ENCODE measurements at regions of chr5 and their contacts with region 1.

Region 1: GRCh38 chr5:151825445-151825844 is 53.7 kb downstream of the G3BP1 start:
- DNase-seq: peak in 8 of 10 donors; percentile 37 to 67 (median 60)
- H3K4me3 ChIP-seq: no peak overlapping the region
- H3K27ac ChIP-seq: peak overlapping the region in 1 of 59 donors; percentile 11
- H3K27me3 ChIP-seq: no peaks in the 10 kb centered on the region
- CTCF ChIP-seq: peak; percentile 77 to 97 (median 89)

Region 2: DNA sequence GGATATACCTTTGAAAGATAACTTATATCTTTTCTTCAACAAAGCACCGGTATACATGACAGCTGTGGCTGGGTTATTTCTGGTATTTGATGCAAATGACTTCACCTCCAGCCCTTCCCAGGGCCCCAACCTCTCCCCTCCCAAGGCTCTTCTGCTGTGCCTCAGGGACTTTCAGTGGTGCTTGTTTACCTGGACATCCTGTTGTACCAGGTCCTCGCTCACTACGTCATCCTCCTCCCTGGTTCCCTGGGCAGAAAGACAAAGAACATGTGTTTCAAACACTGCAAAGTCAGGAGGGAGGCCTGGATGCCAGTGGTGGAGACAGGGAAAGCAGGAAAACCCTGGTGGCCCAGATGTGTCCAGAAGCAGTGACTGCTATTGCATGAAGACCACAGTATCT is 691.2 kb before region 1 on chr5:
- intact Hi-C with region 1: no loop called
- DNase-seq: no peak
- H3K4me3 ChIP-seq: no peak overlapping the region
- H3K27ac ChIP-seq: no peak overlapping the region
- H3K27me3 ChIP-seq: no peaks in the 10 kb centered on the region
- CTCF ChIP-seq: no peak

Region 3: DNA sequence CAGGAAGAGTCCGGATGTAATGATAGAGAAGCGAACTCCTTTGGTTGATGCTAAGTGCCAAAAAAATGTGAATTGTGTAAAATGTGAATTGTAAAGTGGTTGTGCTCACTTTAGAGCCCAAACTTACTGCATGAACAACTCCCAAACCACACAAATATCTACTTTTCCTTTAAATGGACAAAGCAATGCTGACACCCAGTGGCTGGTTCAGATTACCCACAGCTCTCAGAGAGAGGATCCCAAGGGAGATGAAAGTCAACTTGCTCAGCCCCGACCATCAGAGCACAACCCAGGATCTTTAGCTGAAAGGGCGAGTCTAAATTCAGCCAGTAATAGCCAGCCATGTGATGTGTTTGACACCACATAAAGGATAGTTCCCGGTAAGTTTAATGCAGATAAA is 446.0 kb after region 1 on chr5:
- intact Hi-C with region 1: loop called (anchors 5 to 10 kb)
- DNase-seq: peak in 5 of 10 donors; percentile 8 to 49 (median 35)
- H3K4me3 ChIP-seq: no peak overlapping the region
- H3K27ac ChIP-seq: no peak overlapping the region
- H3K27me3 ChIP-seq: no peaks in the 10 kb centered on the region
- CTCF ChIP-seq: peak in 52 of 56 donors; percentile 34 to 70 (median 50)

Region 4: GRCh38 chr5:152349683-152350526 is 524.5 kb after region 1 on chr5:
- intact Hi-C with region 1: loop called in 1 of 2 experiments (anchors 2 kb)
- DNase-seq: peak; percentile 37 to 68 (median 56)
- H3K4me3 ChIP-seq: no peak overlapping the region
- H3K27ac ChIP-seq: no peak overlapping the region
- H3K27me3 ChIP-seq: no peaks in the 10 kb centered on the region
- CTCF ChIP-seq: peak; percentile 60 to 91 (median 81)

Measured in dorsolateral prefrontal cortex (tissue), 120 donors.